Tibial artery (tissue), 4 donors: ENCODE measurements at regions of chr19 and their contacts with region 1.

Region 1: DNA sequence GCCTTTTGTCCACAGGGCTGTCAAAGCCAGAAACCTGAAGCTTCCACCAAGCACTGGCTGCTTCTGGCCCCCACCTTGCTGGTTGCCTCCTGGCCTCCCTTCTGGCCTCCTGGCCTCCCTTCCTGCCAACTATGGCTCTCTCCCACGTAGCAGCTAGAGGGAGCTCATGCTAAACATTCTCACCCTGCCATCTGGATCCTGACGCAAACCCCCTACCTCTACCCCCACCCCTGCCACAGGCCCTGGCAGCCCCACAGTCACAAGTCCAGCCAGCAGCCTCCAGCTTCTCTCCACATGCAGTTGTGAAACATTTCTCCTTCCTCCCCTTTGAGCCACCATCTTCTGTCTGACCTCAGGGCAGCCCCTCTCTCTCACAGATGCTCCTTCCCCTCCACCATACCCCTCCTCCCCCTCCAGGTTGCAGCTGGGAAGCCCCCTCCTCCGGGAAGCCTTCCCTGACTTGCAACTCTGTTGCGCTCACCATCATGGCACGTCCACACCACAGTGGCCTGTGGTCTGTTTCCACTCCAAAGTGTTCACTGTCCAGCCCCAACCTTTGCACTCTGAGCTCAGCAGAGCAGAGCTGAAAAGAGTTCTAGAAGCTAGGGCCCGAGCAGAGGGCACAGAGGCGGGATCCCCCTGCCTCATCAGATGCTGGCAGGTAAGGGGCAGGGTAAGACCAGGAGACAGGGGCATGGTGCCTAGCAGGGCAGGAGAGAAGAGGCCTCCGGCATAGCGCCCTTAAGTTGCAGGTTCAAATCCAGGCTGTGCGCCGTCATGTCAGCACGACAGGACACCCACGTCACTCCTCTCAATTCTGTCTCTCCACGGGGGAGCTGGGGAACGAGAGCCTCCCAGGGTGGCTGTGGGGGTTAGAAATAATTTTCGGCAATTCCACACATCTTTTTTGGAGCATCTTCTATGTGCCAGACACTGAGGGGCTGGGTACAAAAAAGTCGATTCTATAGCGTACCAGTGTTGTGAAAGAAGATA is 7.3 kb downstream of the ADGRL1 start:
- DNase-seq: no peak
- H3K4me3 ChIP-seq: no peak overlapping the region
- H3K27ac ChIP-seq: no peak overlapping the region
- H3K4me1 ChIP-seq: no peaks in the 10 kb centered on the region
- H3K27me3 ChIP-seq: no peaks in the 10 kb centered on the region
- CTCF ChIP-seq: no peak

Region 2: DNA sequence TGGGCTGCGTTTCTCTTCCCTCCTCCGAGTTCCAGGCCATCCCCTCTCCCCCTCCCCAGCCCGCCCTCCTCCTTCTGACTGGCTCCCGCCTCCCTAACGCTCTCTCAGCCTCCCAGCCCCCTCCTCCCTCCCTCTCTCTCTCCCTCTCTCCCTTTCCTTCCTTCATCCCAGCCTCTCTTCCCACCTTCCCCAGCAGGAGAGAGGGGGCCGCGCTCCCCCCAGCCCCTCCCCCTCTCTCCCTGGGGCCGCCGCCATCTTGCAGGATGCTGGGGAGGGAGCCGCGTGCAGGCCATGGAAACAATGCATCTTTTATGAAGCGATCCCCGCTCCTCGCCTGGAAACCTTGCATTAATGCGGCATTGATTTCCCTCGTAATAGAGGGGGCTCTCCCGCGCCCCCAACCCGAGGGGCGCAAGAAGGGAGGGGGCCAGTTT is 49.9 kb after region 1 on chr19:
- intact Hi-C with region 1: no loop called
- DNase-seq: no peak
- H3K4me3 ChIP-seq: peak overlapping the region; percentile 43 to 50
- H3K27ac ChIP-seq: no peak overlapping the region
- H3K4me1 ChIP-seq: peaks cover 0 to 21% (median 15%) of the 10 kb centered on the region in 4 donors
- H3K27me3 ChIP-seq: peaks cover 0 to 39% of the 10 kb centered on the region in 2 donors
- CTCF ChIP-seq: no peak

Region 3: GRCh38 chr19:14347999-14348889 is 149.6 kb after region 1 on chr19:
- intact Hi-C with region 1: loop called (anchors 5 kb)
- DNase-seq: peak; percentile 31 to 69
- H3K4me3 ChIP-seq: peak overlapping the region; percentile 13 to 25
- H3K27ac ChIP-seq: no peak overlapping the region
- H3K4me1 ChIP-seq: peaks cover 0 to 7% (median 4%) of the 10 kb centered on the region in 4 donors
- H3K27me3 ChIP-seq: peaks cover 0 to 20% of the 10 kb centered on the region in 2 donors
- CTCF ChIP-seq: peak; percentile 91 to 98

Region 4: DNA sequence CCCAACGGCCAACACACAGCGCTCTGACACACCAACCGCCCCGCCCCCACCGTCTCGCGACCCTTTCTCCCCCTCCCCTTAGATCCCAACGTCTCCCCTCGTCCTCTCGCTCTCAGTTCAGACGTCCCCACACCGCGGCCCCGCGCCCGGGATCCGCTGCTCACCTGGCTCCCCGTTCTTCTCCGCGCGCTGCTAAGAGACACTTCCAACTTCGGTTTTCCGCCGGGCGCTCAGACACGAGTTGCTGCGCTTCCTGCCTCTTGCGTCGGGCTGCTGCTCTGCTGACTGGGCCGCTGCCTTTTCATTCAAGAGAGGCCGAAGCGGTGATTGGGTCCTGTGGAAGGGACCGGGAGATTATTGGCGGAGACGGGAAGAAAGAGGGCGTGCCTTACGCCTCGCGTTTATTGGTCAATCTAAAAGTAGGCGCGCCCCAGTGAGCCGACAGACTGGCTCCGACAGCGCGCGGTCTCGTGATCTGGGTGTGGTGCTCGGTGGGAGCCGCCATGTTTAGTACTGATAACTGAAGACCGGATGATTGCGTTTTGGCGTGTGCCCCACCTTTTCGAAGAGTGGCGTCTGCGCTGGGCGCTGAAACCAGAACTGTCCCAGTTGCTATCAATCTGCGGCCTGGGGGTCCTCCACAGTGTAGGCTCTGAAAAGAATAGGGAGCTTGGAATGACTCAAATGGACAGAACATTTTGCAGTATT is 220.6 kb after region 1 on chr19 and contains the start of gene DDX39A:
- intact Hi-C with region 1: loop called (anchors 10 kb)
- DNase-seq: peak; percentile 99
- H3K4me3 ChIP-seq: peak within 1 kb of the TSS; percentile 81 to 88
- H3K27ac ChIP-seq: peak within 1 kb of the TSS; percentile 93
- H3K4me1 ChIP-seq: peaks cover 0 to 46% (median 24%) of the 10 kb centered on the region in 4 donors
- H3K27me3 ChIP-seq: no peaks in the 10 kb centered on the region
- CTCF ChIP-seq: peak in 1 of 2 experiments; percentile 27